Heart left ventricle (tissue), 16 donors: ENCODE measurements at regions of chr2 and their contacts with region 1.

Region 1: GRCh38 chr2:233353769-233354499 is at the start of gene DGKD:
- DNase-seq: peak; percentile 42 to 85 (median 66)
- ATAC-seq: peak; percentile 34 to 84 (median 73)
- H3K4me3 ChIP-seq: peak within 1 kb of the TSS; percentile 39 to 90 (median 70)
- H3K27ac ChIP-seq: peak within 1 kb of the TSS in 8 of 12 donors; percentile 39 to 81 (median 62)
- H3K4me1 ChIP-seq: peaks cover 0 to 79% (median 30%) of the 10 kb centered on the region in 12 donors
- H3K27me3 ChIP-seq: no peaks in the 10 kb centered on the region
- CTCF ChIP-seq: peak in 9 of 12 donors; percentile 12 to 76 (median 25)
- POLR2A ChIP-seq: no peak
- total RNA-seq, gene DGKD: 15.5 to 67.3 (median 42.8) TPM

Region 2: GRCh38 chr2:232550354-232551249 is 803.3 kb before region 1 on chr2 and contains the starts of genes EIF4E2 and TIGD1:
- intact Hi-C with region 1: loop called in 1 of 10 experiments (anchors 10 kb)
- DNase-seq: peak; percentile 94 to 98 (median 96)
- ATAC-seq: peak; percentile 96 to 98 (median 98)
- H3K4me3 ChIP-seq: peak within 1 kb of the TSS; percentile 71 to 99 (median 86)
- H3K27ac ChIP-seq: peak within 1 kb of the TSS; percentile 80 to 100 (median 97)
- H3K4me1 ChIP-seq: peaks cover 0 to 63% (median 20%) of the 10 kb centered on the region in 12 donors
- H3K27me3 ChIP-seq: no peaks in the 10 kb centered on the region
- CTCF ChIP-seq: peak in 11 of 12 donors; percentile 20 to 47 (median 33)
- POLR2A ChIP-seq: peak in 1 of 2 donors; percentile 82
- total RNA-seq, gene EIF4E2: 15.3 to 49.8 (median 38.8) TPM
- total RNA-seq, gene TIGD1: 0.99 to 3.8 (median 1.6) TPM

Region 3: DNA sequence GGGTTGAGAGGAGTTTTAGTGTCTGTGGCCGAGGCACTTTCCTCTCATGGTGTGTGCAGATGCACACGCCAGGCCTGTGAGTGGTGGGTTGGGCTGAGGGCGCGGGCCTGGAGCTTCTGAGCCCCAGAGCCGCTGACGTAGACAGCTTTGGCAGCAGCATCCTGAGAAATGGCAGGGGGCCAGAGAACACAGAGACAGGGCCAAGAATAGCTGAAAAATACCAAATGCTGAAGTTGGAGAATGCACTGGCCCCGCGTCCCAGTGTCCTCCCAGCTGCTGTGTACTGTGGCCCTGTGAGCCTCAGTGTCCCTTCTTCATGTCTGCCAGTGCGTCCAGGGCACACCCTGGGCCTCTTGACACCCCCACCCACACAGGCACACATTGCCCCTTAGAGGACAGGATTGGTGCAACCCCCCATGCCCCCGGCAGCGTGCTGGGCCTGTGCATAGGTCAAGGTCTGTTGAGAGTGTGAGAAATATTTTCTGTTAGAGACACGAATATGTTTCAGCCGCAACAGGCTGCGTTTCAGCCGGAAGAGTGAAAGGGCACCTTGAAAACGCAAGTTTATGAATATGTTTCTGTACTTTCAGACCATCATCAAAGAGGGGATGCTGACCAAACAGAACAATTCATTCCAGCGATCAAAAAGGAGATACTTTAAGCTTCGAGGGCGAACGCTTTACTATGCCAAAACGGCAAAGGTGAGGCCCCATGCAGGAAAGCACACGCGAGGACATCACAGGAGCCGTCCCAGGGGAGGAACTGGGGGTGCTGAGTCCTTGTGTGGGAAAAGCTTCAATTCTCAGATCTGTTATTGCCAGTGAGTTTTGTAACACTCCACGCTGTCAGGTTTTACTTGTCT is 34.0 kb after region 1 on chr2:
- intact Hi-C with region 1: loop called in 3 of 10 experiments (anchors 2 to 5 kb)
- DNase-seq: peak; percentile 92 to 95 (median 94)
- ATAC-seq: peak; percentile 95 to 97 (median 96)
- H3K4me3 ChIP-seq: peak overlapping the region in 9 of 12 donors; percentile 1 to 35 (median 20)
- H3K27ac ChIP-seq: peak overlapping the region; percentile 82 to 93 (median 90)
- H3K4me1 ChIP-seq: peaks cover 11 to 52% (median 38%) of the 10 kb centered on the region in 12 donors
- H3K27me3 ChIP-seq: no peaks in the 10 kb centered on the region
- CTCF ChIP-seq: no peak
- POLR2A ChIP-seq: peak in 1 of 2 donors; percentile 20

Region 4: DNA sequence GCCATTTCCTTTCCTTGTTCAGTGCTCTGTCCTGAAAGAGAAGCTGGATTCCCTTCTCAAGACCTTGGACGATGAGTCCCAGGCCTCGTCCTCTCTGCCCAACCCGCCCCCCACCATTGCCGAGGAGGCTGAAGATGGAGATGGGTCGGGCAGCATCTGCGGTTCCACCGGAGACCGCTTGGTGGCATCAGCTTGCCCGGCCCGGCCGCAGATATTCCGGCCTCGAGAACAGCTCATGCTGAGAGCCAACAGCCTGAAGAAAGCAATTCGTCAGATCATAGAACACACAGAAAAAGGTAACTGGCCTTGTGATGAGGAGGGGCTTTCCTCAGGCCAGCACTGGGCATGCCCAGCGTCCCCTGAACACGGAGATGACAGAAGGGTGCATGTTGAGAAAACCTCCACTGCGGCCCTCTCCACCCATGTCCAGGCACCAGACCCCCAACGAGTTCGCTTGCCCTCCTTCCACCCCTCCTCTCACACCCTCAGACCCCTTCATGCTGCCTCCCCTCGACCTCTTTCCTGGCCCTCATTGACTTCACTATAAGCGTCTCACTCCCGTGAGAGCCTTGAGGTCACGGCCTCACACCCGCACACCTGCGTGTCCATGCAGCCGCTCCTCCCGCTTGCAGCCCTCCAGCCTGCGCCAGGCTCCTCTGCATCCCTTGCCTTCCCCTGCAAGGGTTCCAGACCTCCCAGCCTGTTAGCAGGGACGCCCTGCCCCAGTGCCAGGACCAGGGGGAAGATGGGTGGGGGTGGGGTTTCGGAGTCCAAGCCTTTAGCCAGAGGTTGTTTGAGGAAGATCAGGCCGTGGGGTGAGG is 95.4 kb after region 1 on chr2:
- intact Hi-C with region 1: loop called in 5 of 10 experiments (anchors 2 to 5 kb)
- DNase-seq: no peak
- ATAC-seq: peak in 2 of 4 donors; percentile 11 to 36
- H3K4me3 ChIP-seq: no peak overlapping the region
- H3K27ac ChIP-seq: no peak overlapping the region
- H3K4me1 ChIP-seq: peaks cover 0 to 5% (median 0%) of the 10 kb centered on the region in 12 donors
- H3K27me3 ChIP-seq: no peaks in the 10 kb centered on the region
- CTCF ChIP-seq: peak; percentile 27 to 66 (median 49)
- POLR2A ChIP-seq: no peak

Region 5: DNA sequence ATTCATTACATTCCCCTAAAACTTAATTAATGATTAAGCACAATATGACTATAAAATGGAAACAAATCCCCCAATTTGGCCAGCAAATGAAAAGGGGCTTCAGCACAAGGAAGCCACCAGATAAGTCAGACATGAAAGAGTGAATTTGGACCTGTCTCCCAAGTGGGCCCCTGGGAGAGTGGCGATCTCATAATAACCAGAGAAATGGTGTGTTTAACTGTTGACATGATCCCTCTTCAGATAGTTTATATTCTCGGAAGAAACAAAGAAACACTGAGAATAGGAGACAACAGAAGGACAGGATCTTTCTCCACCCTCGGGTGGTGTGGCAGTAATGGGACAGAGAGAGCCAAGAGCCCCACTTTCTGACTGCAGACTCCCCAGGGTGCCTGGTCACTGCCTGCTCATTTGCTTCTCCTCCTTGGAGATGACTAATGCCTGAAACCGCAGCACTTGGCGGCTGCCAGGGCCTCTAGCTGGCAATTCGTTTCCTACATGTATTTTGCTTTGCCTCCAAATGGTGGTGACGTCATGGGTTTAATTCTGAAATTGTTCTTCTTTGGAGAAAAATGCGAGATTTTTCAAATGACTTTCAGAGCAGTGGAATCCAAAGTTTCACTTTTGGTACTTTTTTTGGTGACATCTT is 650.2 kb after region 1 on chr2:
- intact Hi-C with region 1: no loop called
- DNase-seq: no peak
- ATAC-seq: peak in 1 of 4 donors; percentile 44
- H3K4me3 ChIP-seq: no peak overlapping the region
- H3K27ac ChIP-seq: no peak overlapping the region
- H3K4me1 ChIP-seq: no peaks in the 10 kb centered on the region
- H3K27me3 ChIP-seq: peaks cover 0 to 37% (median 2%) of the 10 kb centered on the region in 9 donors
- CTCF ChIP-seq: no peak
- POLR2A ChIP-seq: no peak